Activated B cell treated with CpG ODN at 0.5 μM for 24 hours (primary cell): ENCODE measurements at regions of chr22 and their contacts with region 1.

Region 1: DNA sequence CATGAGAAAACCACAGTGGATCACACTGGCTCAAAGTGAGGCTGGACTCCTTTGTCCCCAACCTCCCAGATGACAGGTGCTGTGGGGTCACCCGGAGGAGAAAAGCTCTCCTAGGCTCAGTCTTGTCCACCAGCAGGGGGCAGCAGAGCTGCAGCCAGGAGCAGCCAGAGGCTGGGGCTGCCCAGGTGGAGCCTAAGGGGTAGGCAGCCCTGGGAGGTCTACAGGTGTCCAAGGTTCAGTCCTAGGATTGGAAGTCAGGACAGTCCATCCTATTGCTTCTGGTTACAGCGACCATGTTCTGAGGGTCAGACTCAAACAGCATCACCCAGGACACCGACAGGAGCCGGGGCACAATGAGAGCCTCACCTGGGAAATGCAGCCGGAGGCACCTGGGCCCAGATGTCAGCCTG is 77.6 kb upstream of the IGLL5 start:
- DNase-seq: peak; percentile 60
- ATAC-seq: peak; percentile 76
- H3K4me3 Mint-ChIP-seq: no peak overlapping the region
- H3K27ac Mint-ChIP-seq: no peak overlapping the region
- H3K4me1 Mint-ChIP-seq: peaks cover 21% of the 10 kb centered on the region
- H3K27me3 Mint-ChIP-seq: peaks cover 3% of the 10 kb centered on the region
- CTCF ChIP-seq: peak; percentile 80

Region 2: DNA sequence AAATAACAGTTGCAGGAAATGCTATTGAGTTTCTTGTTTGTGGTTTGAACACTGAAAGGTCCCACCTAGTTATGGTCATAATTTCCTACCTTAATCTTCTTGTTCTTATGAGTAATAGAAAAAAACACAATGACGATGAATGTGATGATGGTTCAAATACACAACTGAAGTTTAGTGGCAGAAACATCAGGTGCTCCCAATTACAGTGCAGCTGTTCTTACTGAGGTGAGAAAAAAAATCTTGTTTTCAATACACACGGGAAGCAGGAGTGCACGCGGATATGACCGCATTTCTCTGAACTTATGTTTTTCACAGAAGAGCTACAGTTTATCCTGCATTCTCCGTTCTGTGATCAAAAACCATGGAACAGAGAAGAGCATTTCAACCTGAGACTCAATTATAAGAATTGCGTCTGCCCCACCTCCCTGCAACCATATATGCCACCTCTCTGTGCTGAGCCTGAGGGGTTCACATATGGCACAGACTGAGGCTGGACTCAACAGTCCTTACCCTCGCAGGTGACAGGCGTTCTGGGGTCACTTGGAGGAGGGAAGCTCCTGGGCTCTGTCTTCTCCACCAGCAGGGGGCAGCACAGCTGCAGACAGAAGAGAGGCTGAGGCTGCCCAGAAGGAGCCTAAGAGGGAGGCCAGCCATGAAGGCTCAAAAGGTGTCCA is 22.1 kb before region 1 on chr22:
- CTCF ChIA-PET with region 1: interaction called, 18 read pairs
- POLR2A ChIA-PET with region 1: no interaction called
- intact Hi-C with region 1: loop called (anchors 1 kb)
- DNase-seq: peak; percentile 52
- ATAC-seq: peak; percentile 83
- H3K4me3 Mint-ChIP-seq: no peak overlapping the region
- H3K27ac Mint-ChIP-seq: no peak overlapping the region
- H3K4me1 Mint-ChIP-seq: no peaks in the 10 kb centered on the region
- H3K27me3 Mint-ChIP-seq: peaks cover 4% of the 10 kb centered on the region
- CTCF ChIP-seq: no peak

Region 3: DNA sequence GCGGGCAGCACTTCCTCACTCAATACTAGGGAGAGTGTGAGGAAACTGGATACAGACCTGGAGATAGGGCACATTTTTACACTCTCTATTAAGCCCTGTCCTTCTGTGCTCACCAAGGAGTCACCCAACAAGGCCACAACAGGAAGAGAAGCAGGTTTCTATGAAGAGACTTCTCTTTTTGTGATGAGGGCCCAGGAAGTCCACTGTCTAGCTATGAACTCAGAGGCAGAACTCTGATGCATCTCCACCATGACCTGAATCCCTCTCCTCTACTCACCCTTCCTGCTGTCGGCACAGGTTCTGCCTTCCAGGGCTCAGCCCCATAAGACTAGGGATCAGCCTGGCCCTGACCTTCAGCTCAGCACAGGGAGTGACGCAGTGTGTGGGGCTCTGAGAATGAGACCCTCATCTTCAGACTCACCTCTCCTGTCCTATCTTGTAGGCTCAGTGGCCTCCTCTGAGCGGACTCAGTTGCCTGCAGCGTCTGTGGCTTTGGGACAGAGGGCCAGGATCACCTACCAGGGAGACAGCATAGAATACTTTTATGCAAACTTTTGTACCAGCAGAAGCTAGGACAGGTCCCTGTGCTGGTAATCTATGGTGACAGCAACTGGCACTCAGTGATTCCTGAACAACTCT is 28.2 kb after region 1 on chr22:
- CTCF ChIA-PET with region 1: interaction called, 11 read pairs
- POLR2A ChIA-PET with region 1: no interaction called
- intact Hi-C with region 1: no loop called
- DNase-seq: no peak
- ATAC-seq: peak; percentile 70
- H3K4me3 Mint-ChIP-seq: no peak overlapping the region
- H3K27ac Mint-ChIP-seq: no peak overlapping the region
- H3K4me1 Mint-ChIP-seq: peaks cover 21% of the 10 kb centered on the region
- H3K27me3 Mint-ChIP-seq: peaks cover 8% of the 10 kb centered on the region
- CTCF ChIP-seq: no peak

Region 4: GRCh38 chr22:23036684-23037428 is 226.8 kb after region 1 on chr22:
- CTCF ChIA-PET with region 1: no interaction called
- POLR2A ChIA-PET with region 1: no interaction called
- intact Hi-C with region 1: no loop called
- DNase-seq: no peak
- ATAC-seq: peak; percentile 36
- H3K4me3 Mint-ChIP-seq: peak overlapping the region; percentile 45
- H3K27ac Mint-ChIP-seq: peak overlapping the region; percentile 75
- H3K4me1 Mint-ChIP-seq: peaks cover 59% of the 10 kb centered on the region
- H3K27me3 Mint-ChIP-seq: no peaks in the 10 kb centered on the region
- CTCF ChIP-seq: no peak